Heart left ventricle (tissue), 16 donors: ENCODE measurements at regions of chr16 and their contacts with region 1.

Region 1: GRCh38 chr16:11263737-11264136 is 5.4 kb downstream of the TNP2 start:
- DNase-seq: no peak
- ATAC-seq: no peak
- H3K4me3 ChIP-seq: no peak overlapping the region
- H3K27ac ChIP-seq: no peak overlapping the region
- H3K4me1 ChIP-seq: peaks cover 0 to 10% (median 9%) of the 10 kb centered on the region in 12 donors
- H3K27me3 ChIP-seq: no peaks in the 10 kb centered on the region
- CTCF ChIP-seq: no peak
- POLR2A ChIP-seq: no peak

Region 2: DNA sequence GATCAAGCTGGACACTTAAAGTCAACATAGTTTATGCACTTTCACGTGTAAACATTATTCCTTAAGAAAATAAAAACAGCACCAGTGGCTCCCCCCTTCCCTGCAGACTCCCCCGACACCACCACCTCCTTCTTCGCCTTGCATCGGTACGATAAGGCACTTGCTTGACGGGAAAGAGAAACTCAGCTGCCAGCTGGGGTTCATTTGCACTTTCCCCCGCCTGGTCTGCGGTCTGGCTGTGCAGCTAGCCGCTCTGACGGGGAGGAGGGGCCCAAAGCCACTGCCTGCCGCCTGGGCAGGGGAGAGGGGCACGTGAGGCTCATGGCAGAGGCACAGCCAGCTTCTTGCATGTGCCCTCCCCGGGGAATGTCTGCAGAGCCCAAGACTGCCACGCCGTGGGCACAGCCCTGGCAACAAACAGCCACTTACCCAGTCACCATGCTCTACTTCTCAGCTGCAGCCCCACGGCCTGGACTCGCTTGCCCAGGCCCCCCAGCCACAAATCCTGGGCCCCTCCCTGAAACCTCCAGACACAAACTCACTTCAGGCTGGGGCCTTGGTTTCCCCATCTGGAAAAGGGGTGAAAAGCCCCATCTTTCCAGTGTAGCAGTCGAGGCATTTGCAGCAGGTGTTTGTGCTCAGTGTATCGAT is 33.9 kb after region 1 on chr16:
- intact Hi-C with region 1: loop called in 2 of 10 experiments (anchors 5 kb)
- DNase-seq: peak; percentile 68 to 88 (median 78)
- ATAC-seq: peak; percentile 95 to 98 (median 96)
- H3K4me3 ChIP-seq: peak overlapping the region in 8 of 12 donors; percentile 4 to 38 (median 22)
- H3K27ac ChIP-seq: peak overlapping the region in 10 of 12 donors; percentile 53 to 70 (median 60)
- H3K4me1 ChIP-seq: peaks cover 0 to 23% (median 13%) of the 10 kb centered on the region in 12 donors
- H3K27me3 ChIP-seq: no peaks in the 10 kb centered on the region
- CTCF ChIP-seq: peak in 5 of 12 donors; percentile 16 to 47 (median 38)
- POLR2A ChIP-seq: no peak

Region 3: GRCh38 chr16:11345040-11345862 is 81.5 kb after region 1 on chr16 and contains the start of gene RMI2:
- intact Hi-C with region 1: loop called in 2 of 10 experiments (anchors 5 to 10 kb)
- DNase-seq: peak; percentile 97 to 98 (median 97)
- ATAC-seq: peak; percentile 94 to 99 (median 99)
- H3K4me3 ChIP-seq: peak within 1 kb of the TSS; percentile 33 to 85 (median 61)
- H3K27ac ChIP-seq: peak within 1 kb of the TSS in 2 of 12 donors; percentile 26 to 42
- H3K4me1 ChIP-seq: peaks cover 0 to 40% (median 17%) of the 10 kb centered on the region in 12 donors
- H3K27me3 ChIP-seq: no peaks in the 10 kb centered on the region
- CTCF ChIP-seq: no peak
- POLR2A ChIP-seq: no peak
- total RNA-seq, gene RMI2: 0.23 to 6.6 (median 1.1) TPM in 7 of 9 donors, not detected in the others

Region 4: DNA sequence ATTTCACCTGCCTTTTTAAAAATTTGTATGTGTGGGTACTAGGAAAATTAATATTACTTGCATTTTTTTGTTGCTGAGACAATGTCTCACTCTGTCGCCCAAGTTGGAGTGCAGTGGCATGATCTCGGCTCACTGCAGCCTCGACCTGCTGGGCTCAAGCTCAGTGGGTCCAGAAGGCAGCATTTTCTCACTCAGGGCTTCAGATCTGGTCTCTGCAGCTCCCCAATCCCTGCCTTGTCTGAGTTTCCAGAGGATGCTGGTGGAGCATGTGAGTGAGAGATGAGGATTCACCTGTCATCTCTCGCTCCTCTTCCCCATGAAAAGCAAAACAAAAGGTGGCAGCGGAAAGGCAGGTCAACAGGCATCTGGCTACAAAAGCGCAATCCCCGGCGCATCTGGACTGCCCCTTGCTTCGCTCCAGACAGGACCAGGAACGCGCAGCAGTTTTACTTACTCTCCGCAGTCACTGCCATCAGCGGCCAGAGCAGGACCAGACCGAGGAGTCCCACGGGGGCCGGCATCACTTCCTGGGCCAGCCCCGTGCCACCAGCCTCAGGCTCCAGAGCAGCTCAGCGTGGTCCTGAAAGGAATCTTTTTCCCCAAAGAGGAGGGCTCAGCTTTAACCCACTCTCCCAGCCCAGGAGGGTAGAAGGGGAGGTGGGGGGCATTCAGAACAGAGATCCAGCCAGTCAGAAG is 263.1 kb after region 1 on chr16:
- intact Hi-C with region 1: no loop called
- DNase-seq: no peak
- ATAC-seq: no peak
- H3K4me3 ChIP-seq: no peak overlapping the region
- H3K27ac ChIP-seq: no peak overlapping the region
- H3K4me1 ChIP-seq: peaks cover 0 to 6% (median 0%) of the 10 kb centered on the region in 12 donors
- H3K27me3 ChIP-seq: peaks cover 0 to 12% (median 2%) of the 10 kb centered on the region in 9 donors
- CTCF ChIP-seq: no peak
- POLR2A ChIP-seq: no peak

Region 5: DNA sequence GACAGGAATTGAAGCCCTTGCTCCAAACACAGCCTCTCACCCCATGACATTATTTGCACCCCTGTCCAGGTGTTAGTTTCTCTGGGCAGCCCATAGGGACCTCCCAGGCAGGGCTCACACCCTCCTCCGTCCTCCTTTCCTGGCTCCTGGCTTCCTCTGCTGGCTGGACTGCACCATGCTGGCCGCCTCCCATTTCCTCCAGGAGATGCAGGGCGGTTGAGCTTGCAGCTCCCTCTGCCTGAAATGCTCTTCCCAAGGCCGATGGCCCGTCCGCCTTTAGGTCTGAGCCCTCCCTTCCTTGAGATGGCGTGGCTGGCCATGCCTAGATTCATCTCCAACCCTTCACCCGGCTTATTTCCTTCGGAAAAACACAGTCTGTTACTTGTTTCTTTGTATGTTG is 1047.6 kb after region 1 on chr16:
- intact Hi-C with region 1: no loop called
- DNase-seq: peak in 3 of 5 donors; percentile 37 to 66 (median 45)
- ATAC-seq: peak; percentile 40 to 89 (median 60)
- H3K4me3 ChIP-seq: no peak overlapping the region
- H3K27ac ChIP-seq: peak overlapping the region in 3 of 12 donors; percentile 13 to 55 (median 19)
- H3K4me1 ChIP-seq: peaks cover 0 to 11% (median 0%) of the 10 kb centered on the region in 12 donors
- H3K27me3 ChIP-seq: no peaks in the 10 kb centered on the region
- CTCF ChIP-seq: peak in 6 of 12 donors; percentile 0 to 44 (median 24)
- POLR2A ChIP-seq: no peak